Activated CD4-positive, alpha-beta T cell treated with anti-CD3 and anti-CD28 coated beads for 36 hours (primary cell): ENCODE measurements at regions of chr3 and their contacts with region 1.

Region 1: GRCh38 chr3:185942907-185943759 is 5.3 kb upstream of the TRA2B start:
- DNase-seq: peak; percentile 92
- ATAC-seq: peak; percentile 96
- H3K4me3 Mint-ChIP-seq: no peak overlapping the region
- H3K27ac Mint-ChIP-seq: no peak overlapping the region
- H3K4me1 Mint-ChIP-seq: peaks cover 22% of the 10 kb centered on the region
- H3K27me3 Mint-ChIP-seq: peaks cover 4% of the 10 kb centered on the region

Region 2: GRCh38 chr3:185924375-185924774 is 18.8 kb before region 1 on chr3:
- CTCF ChIA-PET with region 1: interaction called, 39 read pairs
- POLR2A ChIA-PET with region 1: interaction called, 36 read pairs
- intact Hi-C with region 1: no loop called
- DNase-seq: no peak
- ATAC-seq: no peak
- H3K4me3 Mint-ChIP-seq: no peak overlapping the region
- H3K27ac Mint-ChIP-seq: peak overlapping the region; percentile 11
- H3K4me1 Mint-ChIP-seq: peaks cover 60% of the 10 kb centered on the region
- H3K27me3 Mint-ChIP-seq: no peaks in the 10 kb centered on the region

Region 3: DNA sequence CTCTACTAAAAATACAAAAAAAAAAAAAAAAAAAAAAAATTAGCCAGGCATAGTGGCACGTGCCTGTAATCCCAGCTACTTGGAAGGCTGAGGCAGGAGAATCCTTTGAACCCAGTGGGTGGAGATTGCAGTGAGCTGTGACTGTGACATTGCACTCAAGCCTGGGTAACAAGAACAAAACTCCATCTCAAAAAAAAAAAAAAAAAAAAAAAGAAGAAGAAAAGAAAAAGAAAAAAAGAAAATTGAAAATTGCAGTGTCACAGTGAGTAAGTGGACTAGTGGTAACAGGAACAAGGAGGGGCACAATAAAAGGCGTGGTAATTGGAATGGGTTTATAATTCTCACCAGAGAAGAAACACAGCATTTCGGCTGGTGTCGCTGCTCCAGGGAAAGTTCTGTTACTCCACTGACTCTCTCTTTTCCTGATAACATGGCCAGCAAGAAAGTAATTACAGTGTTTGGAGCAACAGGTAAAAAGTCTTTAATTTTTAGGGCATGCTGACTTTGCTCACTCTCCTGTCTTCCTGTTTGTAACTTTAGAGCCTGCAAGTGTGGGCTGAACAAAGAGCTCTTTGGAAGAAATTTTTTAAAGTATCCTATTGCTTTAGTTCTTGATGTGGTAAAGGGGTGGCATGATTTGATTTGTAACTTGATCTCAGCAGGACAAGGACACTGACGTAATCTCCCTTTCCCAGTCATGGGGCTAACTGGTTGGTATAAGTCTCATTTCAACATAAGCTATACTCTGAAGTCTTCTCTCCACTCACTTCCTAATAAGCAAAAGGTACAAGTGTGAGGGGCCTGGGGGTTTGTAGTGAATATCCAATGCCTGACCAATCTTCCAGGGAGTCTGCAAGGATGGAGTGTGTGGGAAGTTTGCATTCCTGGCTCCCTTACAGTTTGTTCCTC is 16.7 kb after region 1 on chr3:
- CTCF ChIA-PET with region 1: interaction called, 129 read pairs
- POLR2A ChIA-PET with region 1: no interaction called
- intact Hi-C with region 1: loop called in 1 of 2 experiments (anchors 1 kb)
- DNase-seq: no peak
- ATAC-seq: peak; percentile 61
- H3K4me3 Mint-ChIP-seq: no peak overlapping the region
- H3K27ac Mint-ChIP-seq: no peak overlapping the region
- H3K4me1 Mint-ChIP-seq: peaks cover 1% of the 10 kb centered on the region
- H3K27me3 Mint-ChIP-seq: no peaks in the 10 kb centered on the region

Region 4: GRCh38 chr3:185976977-185977678 is 34.0 kb after region 1 on chr3:
- CTCF ChIA-PET with region 1: interaction called, 40 read pairs
- POLR2A ChIA-PET with region 1: interaction called, 6 read pairs
- intact Hi-C with region 1: loop called (anchors 1 to 2 kb)
- DNase-seq: peak; percentile 93
- ATAC-seq: peak; percentile 91
- H3K4me3 Mint-ChIP-seq: no peak overlapping the region
- H3K27ac Mint-ChIP-seq: peak overlapping the region; percentile 11
- H3K4me1 Mint-ChIP-seq: peaks cover 18% of the 10 kb centered on the region
- H3K27me3 Mint-ChIP-seq: no peaks in the 10 kb centered on the region

Region 5: DNA sequence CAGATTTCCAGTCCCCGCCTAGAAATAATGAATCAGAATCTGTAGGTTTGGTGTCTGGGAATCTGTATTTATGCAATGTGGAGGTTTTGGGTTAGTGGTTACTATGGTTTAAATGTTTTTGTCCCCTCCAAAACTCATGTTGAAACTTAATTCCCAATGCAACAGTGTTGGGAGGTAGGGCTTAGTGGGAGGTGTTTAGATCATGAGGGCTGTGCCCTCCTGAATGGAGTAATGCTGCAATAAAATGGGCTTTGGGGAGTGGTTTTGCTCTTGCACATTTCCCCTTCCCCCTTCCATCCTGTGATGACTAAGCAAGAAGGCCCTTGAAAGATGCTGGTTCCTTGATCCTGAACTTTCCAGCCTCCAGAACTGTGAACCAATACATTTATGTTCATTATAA is 872.3 kb after region 1 on chr3:
- CTCF ChIA-PET with region 1: no interaction called
- POLR2A ChIA-PET with region 1: interaction called, 12 read pairs
- intact Hi-C with region 1: no loop called
- DNase-seq: no peak
- ATAC-seq: no peak
- H3K4me3 Mint-ChIP-seq: no peak overlapping the region
- H3K27ac Mint-ChIP-seq: no peak overlapping the region
- H3K4me1 Mint-ChIP-seq: no peaks in the 10 kb centered on the region
- H3K27me3 Mint-ChIP-seq: no peaks in the 10 kb centered on the region